Cardiac septum (tissue), 1 donor: ENCODE measurements at regions of chr7 and their contacts with region 1.

Region 1: DNA sequence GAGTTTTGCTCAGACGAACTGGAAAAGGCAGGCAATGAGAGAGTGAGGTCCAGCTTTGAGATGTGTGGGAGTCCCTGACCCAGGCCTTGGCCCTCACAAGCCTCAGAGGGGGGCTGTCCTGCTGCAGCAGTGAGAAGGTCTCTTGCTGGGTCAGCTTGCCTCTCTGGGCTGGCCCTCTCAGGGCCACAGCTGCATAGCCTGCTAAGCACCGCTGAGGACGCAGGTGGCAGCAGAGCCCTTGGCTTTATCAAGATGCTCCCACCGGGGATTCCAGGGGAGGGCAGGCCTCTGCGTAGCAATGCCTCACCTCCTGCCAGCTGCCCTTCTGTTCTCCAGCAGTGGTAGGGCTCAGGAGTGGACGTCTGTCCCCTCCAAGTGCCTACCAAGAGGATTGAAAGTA is 128.7 kb downstream of the COBL start:
- DNase-seq: no peak

Region 2: DNA sequence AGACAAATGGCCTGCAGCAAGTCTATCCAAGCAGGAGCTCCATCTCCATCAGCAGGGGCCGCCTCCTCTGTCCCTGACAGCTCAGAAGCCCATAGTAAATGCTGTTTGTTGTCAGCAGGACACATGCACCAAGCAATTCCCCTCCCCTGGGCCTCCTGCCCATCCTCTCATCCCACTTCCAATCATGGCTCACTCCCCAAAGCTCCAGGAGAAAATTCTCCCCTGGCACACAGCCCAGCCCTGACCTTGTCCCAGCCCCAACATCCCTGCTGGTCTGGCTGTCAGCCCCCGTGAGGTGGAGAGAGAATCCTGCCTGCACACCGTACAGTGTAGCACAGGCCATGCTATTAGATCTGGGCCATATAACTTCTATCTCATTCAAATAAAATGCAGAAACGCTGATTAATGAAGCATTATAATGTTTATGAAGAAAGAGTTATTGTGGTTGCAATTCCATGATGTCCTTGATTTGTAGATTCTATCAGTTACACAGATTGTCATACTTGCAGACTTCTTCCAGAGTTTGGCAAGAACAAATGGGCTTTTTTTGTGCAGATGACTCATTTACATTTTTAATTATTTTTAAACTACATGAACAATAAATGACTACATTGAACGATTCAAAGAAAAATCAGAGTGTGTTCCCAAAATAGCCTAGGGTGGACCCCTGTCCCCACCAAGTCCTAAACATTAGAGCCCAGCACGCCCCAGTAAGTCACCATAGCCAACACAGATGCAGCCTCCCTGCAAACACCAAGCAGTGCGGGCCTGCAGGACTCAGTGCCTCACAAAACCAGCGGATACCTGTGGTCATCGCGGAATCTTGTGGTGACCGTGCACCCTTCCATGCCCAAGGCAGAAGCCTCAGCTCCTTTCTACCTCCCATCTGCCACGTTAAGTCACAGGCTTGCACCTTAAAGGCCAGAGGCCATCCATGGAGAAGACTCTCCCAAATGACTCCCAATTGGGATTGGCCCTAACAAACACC is 58.6 kb after region 1 on chr7:
- intact Hi-C with region 1: loop called (anchors 5 kb)
- DNase-seq: peak; percentile 90